ENCODE measurements at regions of chr2 and their contacts with region 1.

Region 1: DNA sequence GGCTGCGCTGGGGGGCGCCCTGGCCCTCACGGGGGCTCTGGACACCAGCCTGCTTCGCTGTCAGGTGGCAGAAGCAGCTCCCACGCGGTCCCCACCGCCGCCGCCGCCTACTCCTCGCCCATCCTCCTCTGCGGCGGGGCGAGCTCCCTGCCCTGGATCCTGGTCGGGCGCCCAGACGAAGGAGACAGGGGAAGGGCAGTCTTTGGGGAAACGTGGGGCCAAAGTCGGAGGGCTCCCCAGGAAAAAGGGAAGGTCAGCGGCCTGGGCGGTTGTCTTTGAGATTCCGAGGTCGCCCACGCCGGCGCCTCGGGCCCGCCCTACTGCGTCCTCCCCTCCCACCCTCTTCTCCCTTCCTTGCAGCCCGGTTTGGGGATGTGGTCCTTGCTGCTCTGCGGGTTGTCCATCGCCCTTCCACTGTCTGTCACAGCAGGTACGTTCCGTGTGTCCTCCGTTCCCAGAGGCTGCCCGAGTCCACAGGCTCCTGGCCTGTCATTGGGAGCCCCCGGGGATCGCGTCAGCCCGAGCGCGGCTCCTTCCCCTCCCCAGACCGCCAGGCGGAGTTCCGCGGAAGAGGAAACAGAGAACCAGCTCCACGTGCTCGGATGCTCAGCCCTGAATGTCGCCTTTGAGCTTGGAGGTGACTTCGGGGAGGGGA is 800 bp downstream of the IL1RL2 start:
- DNase-seq: peak; percentile 52 to 53
- H3K4me3 ChIP-seq: peak overlapping the region; percentile 27 to 52 (median 46)
- H3K27ac ChIP-seq: peak overlapping the region; percentile 43 to 88 (median 84)
- H3K4me1 ChIP-seq: peaks cover 0 to 7% of the 10 kb centered on the region in 2 donors
- H3K27me3 ChIP-seq: no peaks in the 10 kb centered on the region
- CTCF ChIP-seq: peak in 4 of 6 experiments; percentile 19 to 41 (median 38)
- POLR2A ChIP-seq: peak in 1 of 2 donors; percentile 51

Region 2: DNA sequence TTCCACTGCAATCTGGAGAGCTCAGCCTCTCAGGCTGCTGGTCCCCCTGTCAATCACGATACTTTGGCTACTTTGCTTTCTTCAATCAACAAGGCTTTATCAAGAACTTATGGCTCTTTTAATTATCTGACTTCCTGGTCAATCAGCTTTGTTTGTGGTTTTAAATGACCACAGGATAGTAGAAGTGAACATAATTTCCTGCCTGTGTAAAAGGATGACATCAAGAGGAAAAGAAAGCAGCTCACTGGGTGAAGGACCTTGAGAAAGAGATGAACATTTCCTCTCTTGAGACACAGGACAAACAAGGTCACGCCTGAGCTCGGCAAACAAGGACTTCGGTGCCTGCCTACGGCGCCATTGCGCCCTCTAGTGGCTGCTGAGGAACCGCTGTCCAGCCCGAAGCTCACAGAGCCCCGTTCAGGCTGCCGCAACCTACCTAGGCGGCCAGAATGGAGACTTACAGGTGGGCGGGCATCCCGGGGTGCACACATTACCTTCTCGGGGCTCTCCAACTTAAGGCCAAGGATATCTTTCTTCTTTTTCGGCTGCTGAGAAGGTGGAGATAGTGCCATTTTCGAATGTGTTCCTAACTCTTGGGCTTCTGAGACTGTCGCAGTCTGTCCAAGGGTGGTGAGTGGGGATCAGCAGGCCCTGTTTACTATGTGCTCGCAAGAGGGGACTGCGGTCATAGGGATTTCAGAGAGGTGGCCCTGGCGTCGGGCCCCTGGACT is 53.2 kb after region 1 on chr2:
- intact Hi-C with region 1: loop called (anchors 10 kb)
- DNase-seq: peak; percentile 93 to 95
- H3K4me3 ChIP-seq: no peak overlapping the region
- H3K27ac ChIP-seq: peak overlapping the region; percentile 83 to 89 (median 88)
- H3K4me1 ChIP-seq: peaks cover 9 to 32% of the 10 kb centered on the region in 2 donors
- H3K27me3 ChIP-seq: no peaks in the 10 kb centered on the region
- CTCF ChIP-seq: peak; percentile 95 to 98 (median 97)
- POLR2A ChIP-seq: peak in 1 of 2 donors; percentile 23

Region 3: DNA sequence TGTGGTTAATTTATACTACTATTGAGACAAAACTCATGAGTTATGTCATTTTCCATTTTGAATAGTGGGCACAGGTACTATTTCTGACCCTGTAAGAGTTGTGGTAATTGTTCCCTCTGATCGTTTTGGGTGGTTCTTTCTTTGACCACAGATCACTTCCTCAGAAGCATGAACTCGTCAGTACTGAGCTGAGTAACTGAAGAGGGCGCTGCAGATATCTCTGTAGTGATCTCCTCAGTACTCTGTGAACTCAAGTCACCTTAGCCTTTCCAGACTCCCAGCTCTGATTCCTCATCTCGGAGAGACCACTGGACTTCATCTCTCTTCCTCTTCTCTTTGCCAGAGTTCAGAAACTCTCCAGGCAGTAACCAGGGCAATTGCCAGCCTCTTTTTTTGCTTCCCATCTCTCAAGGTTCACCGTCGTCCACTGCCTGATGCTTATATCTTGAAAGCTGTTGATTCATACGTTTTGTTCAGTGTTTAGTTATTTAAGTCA is 114.3 kb after region 1 on chr2:
- intact Hi-C with region 1: no loop called
- DNase-seq: peak; percentile 23 to 26
- H3K4me3 ChIP-seq: no peak overlapping the region
- H3K27ac ChIP-seq: no peak overlapping the region
- H3K4me1 ChIP-seq: peaks cover 0 to 12% of the 10 kb centered on the region in 2 donors
- H3K27me3 ChIP-seq: no peaks in the 10 kb centered on the region
- CTCF ChIP-seq: peak in 3 of 6 experiments; percentile 10 to 26 (median 25)
- POLR2A ChIP-seq: no peak